ENCODE measurements at regions of chr3 and their contacts with region 1.

Region 1: GRCh38 chr3:15384510-15385237 is 42.7 kb downstream of the METTL6 start:
- DNase-seq: peak; percentile 34
- H3K4me3 ChIP-seq: no peak overlapping the region
- H3K27ac ChIP-seq: no peak overlapping the region
- H3K4me1 ChIP-seq: peaks cover 26% of the 10 kb centered on the region
- H3K27me3 ChIP-seq: no peaks in the 10 kb centered on the region

Region 2: DNA sequence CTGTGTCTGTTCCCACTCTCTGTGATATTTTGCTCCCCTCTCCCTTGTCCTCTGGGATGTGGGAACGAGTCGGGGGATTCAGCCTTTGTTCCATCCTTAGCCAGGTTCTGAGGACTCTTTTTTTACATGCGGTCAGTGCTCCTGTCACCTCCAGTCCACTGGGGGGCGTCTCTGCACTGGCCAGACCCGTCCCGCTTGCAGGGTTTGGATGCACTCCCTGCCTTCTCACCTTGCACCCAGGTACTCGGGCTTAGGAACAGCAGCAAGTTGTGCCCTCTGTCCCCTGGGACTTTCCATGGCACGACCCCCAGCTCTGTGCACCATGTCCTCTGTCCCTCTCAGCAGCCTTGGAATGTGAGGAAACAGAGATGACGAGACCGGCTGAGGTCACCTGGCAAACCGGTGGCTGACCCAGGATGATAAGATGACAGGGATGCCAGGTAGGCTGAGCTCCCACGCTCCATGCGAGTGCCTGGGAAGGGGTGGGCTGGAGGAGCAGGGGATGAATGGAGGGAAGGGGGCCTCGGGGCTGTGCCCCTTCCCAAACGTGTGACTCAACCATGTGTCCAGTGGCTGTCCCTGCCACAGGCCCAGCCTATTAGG is 593.2 kb before region 1 on chr3:
- in situ Hi-C with region 1: no loop called
- DNase-seq: peak; percentile 64
- H3K4me3 ChIP-seq: no peak overlapping the region
- H3K27ac ChIP-seq: no peak overlapping the region
- H3K4me1 ChIP-seq: no peaks in the 10 kb centered on the region
- H3K27me3 ChIP-seq: peaks cover 25% of the 10 kb centered on the region

Region 3: GRCh38 chr3:15268033-15268631 is 116.5 kb before region 1 on chr3:
- in situ Hi-C with region 1: loop called (anchors 10 kb)
- DNase-seq: peak; percentile 94
- H3K4me3 ChIP-seq: no peak overlapping the region
- H3K27ac ChIP-seq: peak overlapping the region; percentile 92
- H3K4me1 ChIP-seq: peaks cover 24% of the 10 kb centered on the region
- H3K27me3 ChIP-seq: no peaks in the 10 kb centered on the region